PC-9 (cell line): ENCODE measurements at regions of chr11 and their contacts with region 1.

Region 1: DNA sequence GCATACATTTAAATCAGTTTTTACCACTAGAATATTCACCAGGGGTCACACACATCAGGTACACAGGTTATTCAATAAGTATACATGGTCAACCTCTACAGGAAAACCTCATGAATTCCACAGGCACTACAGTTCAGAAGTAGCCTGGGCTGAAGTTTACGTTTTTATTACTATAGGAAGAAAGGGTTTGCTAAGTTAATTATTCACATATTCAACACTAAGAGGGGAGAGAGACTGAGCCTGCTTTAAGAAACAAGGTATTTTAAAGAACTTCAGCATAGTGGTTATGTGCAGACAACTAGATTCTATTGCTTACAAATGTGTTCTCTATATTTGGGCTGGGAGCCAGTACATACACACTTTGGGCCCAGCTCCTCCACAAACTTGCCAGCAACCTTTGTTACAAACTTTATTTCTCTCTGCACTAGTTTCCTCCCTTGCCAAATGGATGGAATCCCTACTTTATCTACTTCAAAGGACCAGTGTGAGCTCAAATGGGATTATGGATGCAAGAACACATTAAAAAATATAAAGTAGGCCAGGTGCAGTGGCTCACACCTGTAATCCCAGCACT is 31.9 kb downstream of the IL18BP start:
- DNase-seq: no peak
- H3K4me3 ChIP-seq: no peak overlapping the region
- H3K27ac ChIP-seq: no peak overlapping the region
- H3K4me1 ChIP-seq: no peaks in the 10 kb centered on the region
- H3K27me3 ChIP-seq: no peaks in the 10 kb centered on the region
- CTCF ChIP-seq: no peak

Region 2: DNA sequence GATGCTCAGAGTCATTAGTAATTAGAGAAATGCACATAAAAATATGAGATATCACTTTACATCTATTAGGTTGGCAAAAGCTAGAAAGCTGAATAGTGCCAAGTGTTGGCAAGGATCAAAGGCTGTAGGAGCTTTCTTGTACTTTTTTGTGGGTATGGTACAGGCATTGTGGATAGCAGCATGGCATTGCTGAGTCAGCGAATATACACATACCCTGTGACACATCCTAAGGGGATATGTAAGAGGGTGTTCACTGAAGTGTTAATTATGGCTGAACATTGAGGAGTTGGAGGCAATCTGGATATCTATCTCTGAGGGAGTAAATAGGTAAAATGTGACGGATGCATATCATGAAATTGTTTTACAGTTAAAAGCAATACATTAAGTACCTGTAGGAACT is 58.9 kb before region 1 on chr11:
- CTCF ChIA-PET with region 1: no interaction called
- POLR2A ChIA-PET with region 1: no interaction called
- intact Hi-C with region 1: no loop called
- DNase-seq: no peak
- H3K4me3 ChIP-seq: no peak overlapping the region
- H3K27ac ChIP-seq: no peak overlapping the region
- H3K4me1 ChIP-seq: no peaks in the 10 kb centered on the region
- H3K27me3 ChIP-seq: no peaks in the 10 kb centered on the region
- CTCF ChIP-seq: no peak

Region 3: GRCh38 chr11:72080256-72080974 is 49.9 kb after region 1 on chr11 and contains the starts of genes LRRC51 and NUMA1:
- CTCF ChIA-PET with region 1: interaction called, 15 read pairs
- POLR2A ChIA-PET with region 1: no interaction called
- intact Hi-C with region 1: no loop called
- DNase-seq: peak; percentile 100
- H3K4me3 ChIP-seq: peak within 1 kb of the TSS; percentile 92
- H3K27ac ChIP-seq: peak within 1 kb of the TSS; percentile 62
- H3K4me1 ChIP-seq: peaks cover 41% of the 10 kb centered on the region
- H3K27me3 ChIP-seq: no peaks in the 10 kb centered on the region
- CTCF ChIP-seq: no peak
- total RNA-seq, gene LRRC51: 17.5 and 19.6 TPM in 2 replicates
- total RNA-seq, gene NUMA1: 221 and 267 TPM in 2 replicates

Region 4: DNA sequence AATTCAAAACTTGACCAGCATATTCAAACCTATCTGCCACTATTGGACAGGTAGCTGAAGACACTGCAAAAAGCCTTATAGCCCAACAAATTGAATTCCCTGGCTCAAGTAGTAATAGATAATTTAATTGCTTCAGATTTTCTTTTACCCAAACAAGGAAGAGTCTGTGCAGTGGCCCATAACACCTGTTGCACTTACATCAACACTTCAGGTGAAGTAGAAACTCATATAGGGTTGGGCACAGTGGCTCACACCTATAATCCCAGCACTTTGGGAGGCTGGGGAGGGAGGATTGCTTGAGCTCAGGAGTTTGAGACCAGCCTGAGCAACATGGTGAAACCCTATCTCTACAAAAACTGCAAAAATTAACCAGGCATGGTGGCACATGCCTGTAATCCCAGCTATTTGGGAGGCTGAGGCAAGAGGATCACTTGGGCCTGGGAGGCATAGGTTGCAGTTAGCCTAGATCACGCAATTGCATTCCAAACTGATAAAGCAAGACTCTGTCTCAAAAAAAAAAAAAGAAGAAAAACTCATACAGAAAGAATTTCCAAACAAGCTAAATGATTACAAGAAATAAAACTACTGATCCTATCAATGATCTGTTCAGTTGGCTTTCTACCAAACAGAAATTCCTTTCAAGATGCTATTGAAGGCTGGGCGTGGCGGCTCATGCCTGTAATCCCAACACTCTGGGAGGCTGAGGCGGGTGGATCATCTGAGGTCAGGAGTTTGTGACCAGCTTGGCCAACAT is 114.4 kb after region 1 on chr11:
- CTCF ChIA-PET with region 1: interaction called, 8 read pairs
- POLR2A ChIA-PET with region 1: no interaction called
- intact Hi-C with region 1: loop called (anchors 1 kb)
- DNase-seq: peak; percentile 63 to 89
- H3K4me3 ChIP-seq: no peak overlapping the region
- H3K27ac ChIP-seq: peak overlapping the region; percentile 50
- H3K4me1 ChIP-seq: peaks cover 6% of the 10 kb centered on the region; the same call in 1 of the 2 replicates
- H3K27me3 ChIP-seq: no peaks in the 10 kb centered on the region
- CTCF ChIP-seq: no peak

Region 5: DNA sequence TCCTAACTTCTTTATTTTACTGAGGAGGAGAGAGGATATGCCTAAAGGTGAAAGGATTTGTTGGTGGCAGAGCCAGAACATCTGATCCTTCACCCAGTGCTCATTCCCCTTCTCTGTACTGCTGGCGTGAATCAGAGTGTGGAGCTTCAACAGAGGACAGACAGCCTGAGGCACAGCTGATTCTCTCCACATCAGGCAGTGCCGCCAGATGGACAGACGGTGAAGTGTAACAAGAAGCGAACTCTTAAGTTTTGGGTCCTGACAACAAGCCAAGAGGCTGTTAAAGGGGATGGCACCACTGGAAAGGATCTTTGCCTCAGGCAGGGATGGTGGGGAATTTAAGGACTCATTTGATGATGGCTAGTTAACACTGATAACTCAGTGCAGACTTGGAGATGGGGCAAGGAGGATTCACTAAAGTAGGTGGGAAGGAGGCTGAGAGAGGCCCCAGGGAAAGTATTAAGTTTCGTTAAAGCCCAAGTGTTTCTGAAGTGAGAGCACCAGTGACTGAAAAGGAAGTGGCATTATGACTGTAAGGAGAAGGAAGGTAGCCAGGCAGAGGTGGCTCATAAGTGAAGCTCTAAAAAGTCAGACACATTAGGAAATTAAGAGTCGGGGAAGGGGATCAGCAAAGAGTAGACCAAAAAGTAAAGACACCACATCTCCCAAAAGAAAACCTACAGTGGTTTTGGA is 322.4 kb after region 1 on chr11:
- CTCF ChIA-PET with region 1: interaction called, 13 read pairs
- POLR2A ChIA-PET with region 1: no interaction called
- intact Hi-C with region 1: no loop called
- DNase-seq: no peak
- H3K4me3 ChIP-seq: no peak overlapping the region
- H3K27ac ChIP-seq: no peak overlapping the region
- H3K4me1 ChIP-seq: no peaks in the 10 kb centered on the region
- H3K27me3 ChIP-seq: no peaks in the 10 kb centered on the region
- CTCF ChIP-seq: no peak

Region 6: DNA sequence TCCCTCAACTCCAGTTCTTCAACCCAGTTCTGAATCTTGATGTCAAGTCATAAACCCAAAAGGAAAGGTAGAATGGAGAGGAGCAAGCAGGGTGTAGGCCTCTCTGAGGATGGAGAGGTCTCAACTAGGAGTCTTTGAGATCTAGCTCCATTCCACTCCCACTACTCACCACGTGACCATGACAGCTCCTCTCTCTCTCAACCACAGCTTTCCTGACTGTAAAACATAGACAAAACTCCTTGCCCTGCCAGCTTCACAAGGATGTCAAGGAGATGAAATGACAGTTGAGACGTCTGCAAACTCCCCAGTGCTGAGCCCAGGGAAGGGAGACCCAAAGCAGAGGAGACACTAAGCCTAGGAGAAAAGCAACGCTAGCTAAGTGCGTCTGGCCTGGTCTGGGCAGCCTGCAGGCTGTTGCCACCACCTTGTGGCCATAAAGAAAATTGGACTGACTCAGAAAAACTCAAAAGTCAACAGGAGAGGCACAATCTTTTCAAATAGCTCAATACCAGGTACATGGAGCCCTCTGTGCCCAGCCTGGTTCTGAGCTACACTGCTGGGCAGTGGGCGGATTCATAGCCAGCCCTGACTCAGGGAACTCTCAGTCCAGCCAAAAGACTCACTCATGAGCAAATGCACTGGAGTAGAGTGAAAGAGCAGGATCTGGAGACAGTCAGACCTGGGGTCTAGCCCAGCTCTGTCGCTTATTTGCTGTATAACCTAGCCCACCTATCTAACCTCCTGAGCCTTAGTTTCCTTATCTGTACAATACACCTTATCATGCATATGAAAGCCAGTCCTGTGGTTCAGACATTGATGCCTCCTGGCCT is 400.4 kb after region 1 on chr11:
- CTCF ChIA-PET with region 1: interaction called, 29 read pairs
- POLR2A ChIA-PET with region 1: no interaction called
- intact Hi-C with region 1: loop called (anchors 1 kb)
- DNase-seq: peak in 1 of 2 experiments; percentile 37
- H3K4me3 ChIP-seq: no peak overlapping the region
- H3K27ac ChIP-seq: no peak overlapping the region
- H3K4me1 ChIP-seq: peaks cover 10% of the 10 kb centered on the region
- H3K27me3 ChIP-seq: no peaks in the 10 kb centered on the region
- CTCF ChIP-seq: peak; percentile 82